Activated B cell treated with CpG ODN at 0.5 μM for 24 hours (primary cell): ENCODE measurements at regions of chr12 and their contacts with region 1.

Region 1: DNA sequence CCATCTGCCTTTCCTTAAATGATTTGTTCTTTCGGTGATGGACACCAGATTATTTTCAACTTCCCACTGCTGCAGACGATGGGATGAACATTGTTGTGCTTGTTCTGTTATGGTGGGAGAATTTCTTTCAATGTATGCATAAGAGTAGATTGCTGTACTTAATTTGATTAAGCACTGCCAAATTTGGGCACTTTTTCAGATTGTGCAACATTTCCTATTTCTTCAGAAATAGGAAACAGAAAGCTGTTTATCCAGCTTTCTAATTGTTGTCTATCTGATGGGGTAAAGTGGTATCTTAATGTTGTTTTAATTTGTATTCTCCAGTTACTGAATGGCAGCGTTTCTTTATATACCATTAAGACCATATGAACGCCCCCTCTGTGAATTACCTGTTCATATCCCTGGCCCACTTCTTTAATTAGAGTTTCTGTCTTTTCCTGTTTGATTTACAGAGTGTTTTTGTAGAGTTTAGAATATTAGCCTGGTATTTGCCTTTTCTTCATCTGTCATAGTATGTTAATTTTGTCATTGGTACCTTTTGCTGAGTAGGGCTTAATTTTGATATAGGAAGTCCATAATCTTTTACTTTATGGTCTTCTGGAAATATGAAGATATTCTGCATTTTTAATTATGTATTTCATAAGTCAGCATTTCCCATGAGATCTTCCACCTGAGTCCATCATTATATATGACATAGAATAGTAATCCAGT is 59.6 kb downstream of the DIP2B start:
- DNase-seq: no peak
- ATAC-seq: no peak
- H3K4me3 Mint-ChIP-seq: no peak overlapping the region
- H3K27ac Mint-ChIP-seq: no peak overlapping the region
- H3K4me1 Mint-ChIP-seq: peaks cover 70% of the 10 kb centered on the region
- H3K27me3 Mint-ChIP-seq: no peaks in the 10 kb centered on the region
- CTCF ChIP-seq: no peak

Region 2: DNA sequence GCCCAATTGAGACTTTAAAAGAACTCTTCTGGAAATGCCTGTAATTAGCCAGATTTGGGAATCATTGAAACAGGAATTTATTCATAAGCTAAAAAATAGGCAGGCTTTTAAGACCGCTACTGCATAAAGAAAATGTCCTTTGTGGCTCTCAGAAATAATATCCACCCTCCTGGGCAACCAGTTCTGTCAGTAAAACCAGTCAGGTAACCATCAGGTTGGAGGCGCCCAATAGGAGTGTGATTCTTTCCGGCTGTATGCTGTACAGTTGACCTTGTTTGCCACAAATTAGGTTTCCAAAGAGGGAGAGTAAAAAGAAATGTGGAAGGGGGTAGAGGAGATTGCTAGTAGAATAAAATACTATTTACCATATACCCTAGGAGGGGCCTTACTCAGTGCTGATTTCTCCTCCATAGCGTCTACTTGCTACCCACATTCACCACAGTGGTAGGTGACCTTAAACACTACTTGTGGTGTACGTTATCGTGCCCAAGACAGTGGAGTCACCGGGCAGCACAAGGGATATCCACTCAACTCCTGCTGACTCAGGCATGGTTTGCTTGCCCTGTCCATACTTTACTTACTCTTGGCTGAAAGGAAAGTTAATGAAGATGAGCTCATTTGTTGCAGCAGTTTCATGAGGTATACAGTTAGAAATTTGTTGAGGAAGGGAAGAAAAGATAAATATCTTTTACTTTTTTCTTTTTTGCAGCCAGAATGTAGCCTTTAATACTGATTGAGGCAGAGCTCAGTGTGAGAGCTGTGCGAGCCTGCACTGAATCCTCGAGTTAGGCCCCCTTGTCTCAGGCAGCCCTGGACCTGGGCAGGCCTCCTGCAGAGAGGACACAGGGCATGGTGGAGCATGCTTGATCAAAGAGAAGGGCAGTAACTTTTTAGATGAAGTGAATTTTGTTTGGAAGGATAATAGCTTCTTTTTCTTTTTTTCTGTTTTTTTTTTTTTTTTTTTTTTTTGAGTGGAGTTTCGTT is 17.1 kb after region 1 on chr12:
- CTCF ChIA-PET with region 1: no interaction called
- POLR2A ChIA-PET with region 1: no interaction called
- intact Hi-C with region 1: loop called (anchors 2 kb)
- DNase-seq: no peak
- ATAC-seq: no peak
- H3K4me3 Mint-ChIP-seq: no peak overlapping the region
- H3K27ac Mint-ChIP-seq: no peak overlapping the region
- H3K4me1 Mint-ChIP-seq: peaks cover 28% of the 10 kb centered on the region
- H3K27me3 Mint-ChIP-seq: no peaks in the 10 kb centered on the region
- CTCF ChIP-seq: no peak